T-cell (primary cell): ENCODE measurements at regions of chr2 and their contacts with region 1.

Region 1: GRCh38 chr2:165927353-165927752 is 26.2 kb downstream of the TTC21B start:
- DNase-seq: no peak
- ATAC-seq: no peak
- H3K4me3 ChIP-seq: no peak overlapping the region
- H3K4me3 Mint-ChIP-seq: no peak overlapping the region
- H3K27ac ChIP-seq: no peak overlapping the region
- H3K27ac Mint-ChIP-seq: no peak overlapping the region
- H3K4me1 ChIP-seq: no peaks in the 10 kb centered on the region
- H3K4me1 Mint-ChIP-seq: no peaks in the 10 kb centered on the region
- H3K27me3 ChIP-seq: no peaks in the 10 kb centered on the region
- H3K27me3 Mint-ChIP-seq: no peaks in the 10 kb centered on the region

Region 2: DNA sequence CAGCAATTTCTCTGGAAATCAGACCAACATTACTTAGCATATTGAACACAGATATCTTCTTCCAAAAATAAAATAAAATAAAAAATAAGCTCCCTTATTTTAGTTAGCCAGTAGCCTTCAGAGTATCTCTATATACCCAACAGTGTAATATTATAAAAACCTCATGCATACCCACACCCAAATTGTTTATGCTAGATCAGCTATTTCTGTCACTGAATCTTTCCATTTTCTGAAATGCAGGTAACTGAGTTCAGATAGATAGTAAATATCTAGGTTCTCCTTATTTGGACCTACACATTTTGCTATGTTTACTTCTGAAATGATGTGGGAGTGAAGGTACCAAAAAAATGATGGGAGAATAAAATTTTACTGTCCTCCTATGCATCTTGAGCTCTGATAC is 13.7 kb before region 1 on chr2:
- CTCF ChIA-PET with region 1: no interaction called
- POLR2A ChIA-PET with region 1: interaction called in 1 of 2 experiments, 11 read pairs
- DNase-seq: no peak
- ATAC-seq: no peak
- H3K4me3 ChIP-seq: no peak overlapping the region
- H3K4me3 Mint-ChIP-seq: no peak overlapping the region
- H3K27ac ChIP-seq: no peak overlapping the region
- H3K27ac Mint-ChIP-seq: no peak overlapping the region
- H3K4me1 ChIP-seq: no peaks in the 10 kb centered on the region
- H3K4me1 Mint-ChIP-seq: no peaks in the 10 kb centered on the region
- H3K27me3 ChIP-seq: no peaks in the 10 kb centered on the region
- H3K27me3 Mint-ChIP-seq: no peaks in the 10 kb centered on the region